ENCODE measurements at regions of chr6 and their contacts with region 1.

Region 1: DNA sequence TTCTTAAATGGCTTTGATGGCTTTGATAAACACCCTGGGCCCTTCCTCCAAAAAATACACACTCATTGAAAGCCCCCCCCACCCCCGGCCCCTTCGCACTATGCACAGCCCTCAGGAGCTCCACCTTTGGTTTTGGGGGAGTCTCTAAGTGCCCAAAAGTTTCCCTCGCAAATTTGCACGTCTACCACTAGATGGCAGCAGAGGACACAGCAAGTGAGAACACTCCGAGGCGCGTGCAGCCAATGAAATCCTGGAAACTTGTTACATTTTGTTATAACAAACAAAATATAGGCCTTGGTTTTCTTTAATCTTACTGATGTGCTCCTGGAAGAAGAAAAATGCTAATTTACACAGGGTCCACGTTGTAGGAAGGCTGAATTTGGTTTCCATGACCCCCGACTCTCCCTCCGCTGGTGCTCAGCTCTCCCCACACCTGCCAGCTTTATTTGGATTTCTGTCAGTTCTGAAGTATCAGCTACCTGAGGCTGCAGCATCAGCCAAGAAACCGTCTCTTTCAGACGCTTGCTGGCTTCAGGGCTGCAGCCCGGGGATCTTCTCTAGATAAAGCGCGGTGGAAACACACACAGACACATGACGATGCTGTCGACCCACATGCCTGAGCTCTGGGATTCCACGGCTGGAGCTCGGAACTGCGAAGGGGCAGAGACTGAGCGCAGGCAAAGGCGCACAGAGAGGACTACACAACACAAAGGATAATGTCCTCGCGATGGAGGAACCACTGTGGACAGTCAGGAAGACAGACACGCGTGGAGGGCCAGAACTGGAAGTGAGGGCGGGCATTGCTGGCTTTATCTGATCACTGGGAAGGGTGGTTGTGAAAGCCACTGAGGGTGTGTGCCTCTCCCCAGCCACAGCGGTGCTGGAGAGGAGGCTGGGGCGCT is 148.4 kb upstream of the RPS6KA2 start:
- DNase-seq: peak; percentile 68 to 76 (median 73)
- H3K4me3 ChIP-seq: no peak overlapping the region
- H3K4me3 Mint-ChIP-seq: no peak overlapping the region
- H3K27ac ChIP-seq: no peak overlapping the region
- H3K27ac Mint-ChIP-seq: no peak overlapping the region
- H3K4me1 ChIP-seq: peaks cover 5% of the 10 kb centered on the region
- H3K4me1 Mint-ChIP-seq: peaks cover 0 to 5% (median 3%) of the 10 kb centered on the region in 4 donors
- H3K27me3 ChIP-seq: no peaks in the 10 kb centered on the region
- H3K27me3 Mint-ChIP-seq: peaks cover 2 to 6% of the 10 kb centered on the region in 2 donors

Region 2: GRCh38 chr6:166456395-166457156 is 318.9 kb before region 1 on chr6:
- CTCF ChIA-PET with region 1: interaction called, 13 read pairs
- POLR2A ChIA-PET with region 1: no interaction called
- intact Hi-C with region 1: no loop called
- DNase-seq: peak in 2 of 5 donors; percentile 13 to 24
- H3K4me3 ChIP-seq: no peak overlapping the region
- H3K4me3 Mint-ChIP-seq: no peak overlapping the region
- H3K27ac ChIP-seq: no peak overlapping the region
- H3K27ac Mint-ChIP-seq: peak overlapping the region in 3 of 7 donors; percentile 24 to 63 (median 38)
- H3K4me1 ChIP-seq: no peaks in the 10 kb centered on the region
- H3K4me1 Mint-ChIP-seq: peaks cover 0 to 2% (median under 1%) of the 10 kb centered on the region in 4 donors
- H3K27me3 ChIP-seq: no peaks in the 10 kb centered on the region
- H3K27me3 Mint-ChIP-seq: no peaks in the 10 kb centered on the region

Region 3: GRCh38 chr6:166664135-166664534 is 111.3 kb before region 1 on chr6:
- CTCF ChIA-PET with region 1: no interaction called
- POLR2A ChIA-PET with region 1: no interaction called
- intact Hi-C with region 1: no loop called
- DNase-seq: no peak
- H3K4me3 ChIP-seq: no peak overlapping the region
- H3K4me3 Mint-ChIP-seq: no peak overlapping the region
- H3K27ac ChIP-seq: no peak overlapping the region
- H3K27ac Mint-ChIP-seq: peak overlapping the region in 1 of 7 donors; percentile 23
- H3K4me1 ChIP-seq: no peaks in the 10 kb centered on the region
- H3K4me1 Mint-ChIP-seq: peaks cover 0 to 7% (median 2%) of the 10 kb centered on the region in 4 donors
- H3K27me3 ChIP-seq: no peaks in the 10 kb centered on the region
- H3K27me3 Mint-ChIP-seq: peaks cover 7 to 11% of the 10 kb centered on the region in 2 donors

Region 4: GRCh38 chr6:166758136-166758704 is 17.2 kb before region 1 on chr6:
- CTCF ChIA-PET with region 1: interaction called, 37 read pairs
- POLR2A ChIA-PET with region 1: no interaction called
- intact Hi-C with region 1: no loop called
- DNase-seq: no peak
- H3K4me3 ChIP-seq: no peak overlapping the region
- H3K4me3 Mint-ChIP-seq: peak overlapping the region in 5 of 8 donors; percentile 51 to 83 (median 61)
- H3K27ac ChIP-seq: no peak overlapping the region
- H3K27ac Mint-ChIP-seq: peak overlapping the region in 2 of 7 donors; percentile 22 to 80
- H3K4me1 ChIP-seq: peaks cover 23% of the 10 kb centered on the region
- H3K4me1 Mint-ChIP-seq: peaks cover 19 to 43% (median 32%) of the 10 kb centered on the region in 4 donors
- H3K27me3 ChIP-seq: no peaks in the 10 kb centered on the region
- H3K27me3 Mint-ChIP-seq: peaks cover 11% of the 10 kb centered on the region in 2 donors

Region 5: GRCh38 chr6:166786704-166787293 is 11.4 kb after region 1 on chr6:
- CTCF ChIA-PET with region 1: interaction called, 10 read pairs
- POLR2A ChIA-PET with region 1: no interaction called
- intact Hi-C with region 1: no loop called
- DNase-seq: peak in 4 of 5 donors; percentile 60 to 66 (median 62)
- H3K4me3 ChIP-seq: no peak overlapping the region
- H3K4me3 Mint-ChIP-seq: no peak overlapping the region
- H3K27ac ChIP-seq: no peak overlapping the region
- H3K27ac Mint-ChIP-seq: no peak overlapping the region
- H3K4me1 ChIP-seq: no peaks in the 10 kb centered on the region
- H3K4me1 Mint-ChIP-seq: no peaks in the 10 kb centered on the region
- H3K27me3 ChIP-seq: no peaks in the 10 kb centered on the region
- H3K27me3 Mint-ChIP-seq: no peaks in the 10 kb centered on the region

Region 6: GRCh38 chr6:166800137-166800536 is 24.7 kb after region 1 on chr6:
- CTCF ChIA-PET with region 1: no interaction called
- POLR2A ChIA-PET with region 1: no interaction called
- intact Hi-C with region 1: no loop called
- DNase-seq: no peak
- H3K4me3 ChIP-seq: no peak overlapping the region
- H3K4me3 Mint-ChIP-seq: no peak overlapping the region
- H3K27ac ChIP-seq: no peak overlapping the region
- H3K27ac Mint-ChIP-seq: no peak overlapping the region
- H3K4me1 ChIP-seq: no peaks in the 10 kb centered on the region
- H3K4me1 Mint-ChIP-seq: no peaks in the 10 kb centered on the region
- H3K27me3 ChIP-seq: no peaks in the 10 kb centered on the region
- H3K27me3 Mint-ChIP-seq: no peaks in the 10 kb centered on the region

Region 7: DNA sequence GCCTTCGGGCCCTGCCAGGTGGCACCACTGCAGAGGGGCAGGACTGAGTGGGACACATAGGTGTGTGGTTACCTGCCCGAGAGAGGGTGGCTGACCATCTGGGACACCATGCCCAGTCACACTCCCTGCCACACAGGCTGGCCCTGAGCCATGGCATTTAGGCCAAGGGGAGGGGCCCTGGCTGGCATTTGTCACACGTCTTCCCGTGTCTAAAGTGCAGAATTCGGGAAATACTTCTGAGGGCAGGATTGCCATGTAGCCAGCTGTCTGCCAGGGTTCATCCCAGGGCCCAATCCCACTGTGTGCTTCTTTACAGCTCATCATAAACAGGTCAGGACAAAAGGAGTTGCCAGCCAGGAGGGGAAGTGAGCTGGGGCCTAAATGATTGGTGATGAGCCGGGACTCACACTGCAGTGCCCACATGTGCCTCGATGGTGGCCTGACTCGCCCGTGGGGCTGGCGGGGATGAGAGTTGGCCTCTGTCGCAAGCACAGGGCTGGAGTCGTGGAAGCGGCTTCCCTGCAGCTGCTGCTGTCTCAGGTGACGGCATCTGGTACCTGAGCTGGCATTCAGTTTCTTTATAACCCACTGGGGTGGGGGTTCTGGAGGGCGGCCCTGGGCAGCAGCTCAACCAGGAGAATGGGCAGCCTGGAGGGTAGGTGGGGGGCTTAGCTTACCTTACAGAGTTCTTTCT is 509.8 kb after region 1 on chr6:
- CTCF ChIA-PET with region 1: interaction called, 11 read pairs
- POLR2A ChIA-PET with region 1: no interaction called
- intact Hi-C with region 1: loop called (anchors 1 kb)
- DNase-seq: no peak
- H3K4me3 ChIP-seq: no peak overlapping the region
- H3K4me3 Mint-ChIP-seq: no peak overlapping the region
- H3K27ac ChIP-seq: no peak overlapping the region
- H3K27ac Mint-ChIP-seq: no peak overlapping the region
- H3K4me1 ChIP-seq: no peaks in the 10 kb centered on the region
- H3K4me1 Mint-ChIP-seq: no peaks in the 10 kb centered on the region
- H3K27me3 ChIP-seq: no peaks in the 10 kb centered on the region
- H3K27me3 Mint-ChIP-seq: peaks cover 4 to 5% of the 10 kb centered on the region in 2 donors

Region 8: GRCh38 chr6:167291623-167292300 is 516.3 kb after region 1 on chr6:
- CTCF ChIA-PET with region 1: interaction called, 11 read pairs
- POLR2A ChIA-PET with region 1: no interaction called
- intact Hi-C with region 1: loop called (anchors 1 kb)
- DNase-seq: no peak
- H3K4me3 ChIP-seq: no peak overlapping the region
- H3K4me3 Mint-ChIP-seq: no peak overlapping the region
- H3K27ac ChIP-seq: no peak overlapping the region
- H3K27ac Mint-ChIP-seq: no peak overlapping the region
- H3K4me1 ChIP-seq: no peaks in the 10 kb centered on the region
- H3K4me1 Mint-ChIP-seq: no peaks in the 10 kb centered on the region
- H3K27me3 ChIP-seq: no peaks in the 10 kb centered on the region
- H3K27me3 Mint-ChIP-seq: peaks cover 6% of the 10 kb centered on the region in 2 donors